ENCODE measurements at regions of chr9 and their contacts with region 1.

Region 1: DNA sequence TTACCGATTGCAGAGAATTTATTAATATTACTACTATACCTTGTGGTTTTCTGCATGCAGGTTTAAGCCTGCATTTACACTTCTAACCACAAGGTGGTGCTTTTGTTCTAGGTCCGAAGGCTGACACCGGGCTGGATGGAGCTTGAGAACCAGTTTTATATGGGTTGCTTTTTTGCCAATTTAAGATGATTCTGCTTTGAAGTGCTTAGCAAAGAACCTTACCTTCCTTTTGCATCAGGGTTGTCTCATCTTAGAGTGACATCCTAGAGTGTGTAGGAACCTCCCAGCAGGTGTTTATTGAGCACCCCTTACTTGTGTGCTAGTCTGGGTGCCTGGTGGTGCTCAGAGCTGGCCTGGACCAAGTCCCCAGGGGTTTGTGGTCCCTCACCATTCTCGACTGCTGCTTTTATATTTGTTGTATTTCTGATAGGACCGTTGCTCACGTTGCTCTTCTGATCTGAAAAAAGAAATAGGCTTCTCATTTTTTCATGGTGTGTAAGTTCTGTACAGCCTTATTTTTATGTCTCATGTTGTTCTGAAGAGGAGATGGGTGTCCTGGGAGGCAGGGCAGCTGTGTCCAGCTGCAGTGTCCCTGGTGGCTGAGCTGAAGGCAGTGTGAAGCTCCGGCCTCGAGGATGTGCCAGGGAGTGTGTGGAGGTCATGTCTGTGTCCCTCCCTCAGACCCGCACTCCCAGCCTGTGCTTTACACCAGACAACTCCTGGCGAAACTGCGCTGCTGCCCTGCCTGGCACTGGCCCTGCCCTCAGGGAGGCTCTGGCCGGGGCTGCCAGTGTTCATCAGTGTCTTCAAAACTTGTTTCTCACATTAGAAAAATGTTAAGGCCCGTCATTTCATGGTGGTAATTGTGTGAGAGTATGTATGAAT is 54.3 kb downstream of the EHMT1 start:
- DNase-seq: peak in 1 of 2 donors; percentile 28
- ATAC-seq: peak; percentile 61 to 63
- H3K4me3 ChIP-seq: no peak overlapping the region
- H3K27ac ChIP-seq: peak overlapping the region in 3 of 4 donors; percentile 4 to 60 (median 8)
- H3K4me1 ChIP-seq: peaks cover 29 to 52% of the 10 kb centered on the region in 2 donors
- H3K27me3 ChIP-seq: no peaks in the 10 kb centered on the region
- CTCF ChIP-seq: peak; percentile 67 to 86 (median 77)
- POLR2A ChIP-seq: no peak

Region 2: GRCh38 chr9:137762414-137763061 is 89.4 kb after region 1 on chr9:
- in situ Hi-C with region 1: no loop called
- intact Hi-C with region 1: loop called (anchors 5 kb)
- DNase-seq: peak in 1 of 2 donors; percentile 49
- ATAC-seq: no peak
- H3K4me3 ChIP-seq: no peak overlapping the region
- H3K27ac ChIP-seq: peak overlapping the region; percentile 15 to 90 (median 84)
- H3K4me1 ChIP-seq: peaks cover 6 to 9% of the 10 kb centered on the region in 2 donors
- H3K27me3 ChIP-seq: no peaks in the 10 kb centered on the region
- CTCF ChIP-seq: no peak
- POLR2A ChIP-seq: no peak

Measured in gastrocnemius medialis (tissue), 4 donors.